Activated naive CD4-positive, alpha-beta T cell treated with anti-CD3 and anti-CD28 coated beads for 36 hours (primary cell): ENCODE measurements at regions of chr3 and their contacts with region 1.

Region 1: DNA sequence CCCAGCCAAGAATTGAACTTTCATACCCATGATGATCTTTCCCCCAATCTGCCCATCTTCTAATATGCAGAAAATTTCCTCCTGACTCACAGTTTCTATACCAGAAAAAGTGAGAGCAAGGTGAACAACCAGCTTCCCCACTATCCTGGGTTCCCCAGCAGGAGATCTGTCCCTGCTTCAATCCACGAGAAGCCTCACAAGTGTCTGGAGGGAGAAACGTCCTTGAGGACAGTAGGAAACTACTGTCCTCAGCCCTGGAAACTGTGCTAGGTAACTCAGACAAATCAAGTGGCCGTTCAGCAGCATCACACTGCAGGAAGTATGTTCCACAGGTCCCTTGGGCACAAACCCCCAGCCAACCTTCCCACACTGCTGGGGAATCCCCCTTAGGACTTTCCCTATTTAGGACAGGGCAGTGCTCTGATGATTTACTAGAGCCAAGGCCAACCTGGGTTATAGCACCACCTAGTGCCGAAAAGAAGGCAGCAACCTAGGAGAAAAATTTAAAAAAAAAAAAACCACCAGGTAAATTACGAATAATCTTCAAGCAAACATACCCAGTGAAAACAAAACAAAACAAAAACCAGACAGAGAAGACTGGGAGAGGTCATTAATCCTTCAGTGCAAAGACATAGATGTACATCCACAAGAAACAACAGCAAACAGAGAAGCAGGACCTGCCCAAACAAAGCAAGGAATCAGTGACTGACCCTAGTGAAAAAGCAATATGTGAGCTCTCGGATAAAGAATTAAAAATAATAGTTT is 36.0 kb downstream of the MORC1 start:
- DNase-seq: peak; percentile 38
- H3K4me3 Mint-ChIP-seq: no peak overlapping the region
- H3K27ac Mint-ChIP-seq: no peak overlapping the region
- H3K4me1 Mint-ChIP-seq: no peaks in the 10 kb centered on the region
- H3K27me3 Mint-ChIP-seq: peaks cover 6% of the 10 kb centered on the region

Region 2: GRCh38 chr3:108662130-108662738 is 419.7 kb before region 1 on chr3:
- CTCF ChIA-PET with region 1: interaction called, 4 read pairs
- intact Hi-C with region 1: loop called (anchors 1 kb)
- DNase-seq: peak; percentile 63
- H3K4me3 Mint-ChIP-seq: no peak overlapping the region
- H3K27ac Mint-ChIP-seq: no peak overlapping the region
- H3K4me1 Mint-ChIP-seq: peaks cover 12% of the 10 kb centered on the region
- H3K27me3 Mint-ChIP-seq: no peaks in the 10 kb centered on the region

Region 3: DNA sequence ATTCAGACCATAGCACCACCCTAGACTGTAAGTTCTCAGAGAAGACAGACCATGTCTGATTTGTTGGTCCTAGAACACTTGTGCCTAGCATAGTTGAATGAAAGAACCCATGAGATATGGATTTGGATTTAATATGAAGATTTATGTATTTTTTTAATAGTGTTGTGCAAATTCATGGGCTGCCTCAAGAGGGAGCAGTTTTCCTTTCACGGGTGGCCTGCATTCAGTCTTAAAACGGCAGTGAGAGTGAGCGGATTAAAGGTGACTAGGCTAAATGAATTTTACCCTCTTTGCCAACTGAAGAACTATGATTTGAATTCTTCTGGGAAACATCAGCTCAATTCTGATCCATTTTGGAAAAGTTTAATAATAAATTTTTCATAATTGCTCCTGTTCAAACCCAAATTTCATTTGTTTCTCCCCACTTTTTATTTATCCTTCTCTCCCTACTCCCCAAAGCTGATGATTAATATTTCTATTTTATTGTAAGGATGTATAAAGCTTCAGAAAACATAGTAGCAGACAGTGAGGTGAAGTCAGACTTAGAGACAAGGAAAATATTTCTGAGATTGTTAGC is 31.2 kb before region 1 on chr3:
- CTCF ChIA-PET with region 1: no interaction called
- intact Hi-C with region 1: loop called (anchors 1 kb)
- DNase-seq: peak; percentile 30
- H3K4me3 Mint-ChIP-seq: no peak overlapping the region
- H3K27ac Mint-ChIP-seq: no peak overlapping the region
- H3K4me1 Mint-ChIP-seq: no peaks in the 10 kb centered on the region
- H3K27me3 Mint-ChIP-seq: peaks cover under 1% of the 10 kb centered on the region